WTC11 (cell line): ENCODE measurements at regions of chr6 and their contacts with region 1.

Region 1: GRCh38 chr6:3848925-3849605 is at the start of gene FAM50B:
- DNase-seq: peak; percentile 98
- ATAC-seq: peak; percentile 98
- H3K4me3 Mint-ChIP-seq: peak within 1 kb of the TSS; percentile 80
- H3K27ac Mint-ChIP-seq: no peak within 1 kb of the TSS
- H3K4me1 Mint-ChIP-seq: peaks cover 9% of the 10 kb centered on the region
- H3K27me3 Mint-ChIP-seq: peaks cover 6% of the 10 kb centered on the region
- CTCF ChIP-seq: peak; percentile 100
- total RNA-seq, gene FAM50B: 2.1 to 3.6 TPM (median 3.3 TPM) in 3 replicates

Region 2: DNA sequence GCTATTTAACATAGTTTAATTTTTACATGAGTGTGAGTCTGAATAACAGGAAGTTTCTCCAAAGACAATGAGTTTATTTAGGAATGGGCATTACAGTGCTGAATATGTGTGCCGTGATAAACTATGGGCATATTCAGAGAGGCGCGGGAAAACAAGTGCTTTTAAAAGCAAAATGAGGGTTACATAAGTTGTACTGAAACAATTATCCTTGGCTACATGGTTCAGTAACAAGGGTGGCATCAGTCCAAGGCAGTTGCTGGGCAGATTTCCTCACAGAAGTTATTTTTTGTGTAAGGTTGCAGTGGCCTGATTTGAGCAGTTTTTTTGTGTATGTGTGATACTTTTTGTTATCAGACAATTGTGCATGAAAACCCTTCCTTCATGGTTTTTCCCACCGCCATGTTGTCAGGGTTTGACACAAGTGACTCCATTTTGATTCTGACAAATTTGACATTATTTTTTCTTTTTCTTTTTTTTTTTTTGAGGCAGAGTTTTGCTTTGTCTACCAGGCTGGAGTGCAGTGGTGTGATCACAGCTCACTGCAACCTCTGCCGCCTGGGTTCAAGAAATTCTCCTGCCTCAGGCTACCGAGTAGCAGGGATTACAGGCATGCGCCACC is 75.3 kb before region 1 on chr6:
- CTCF ChIA-PET with region 1: interaction called, 21 read pairs
- POLR2A ChIA-PET with region 1: interaction called, 3 read pairs
- DNase-seq: no peak
- ATAC-seq: no peak
- H3K4me3 Mint-ChIP-seq: no peak overlapping the region
- H3K27ac Mint-ChIP-seq: no peak overlapping the region
- H3K4me1 Mint-ChIP-seq: peaks cover 24% of the 10 kb centered on the region
- H3K27me3 Mint-ChIP-seq: no peaks in the 10 kb centered on the region
- CTCF ChIP-seq: no peak

Region 3: DNA sequence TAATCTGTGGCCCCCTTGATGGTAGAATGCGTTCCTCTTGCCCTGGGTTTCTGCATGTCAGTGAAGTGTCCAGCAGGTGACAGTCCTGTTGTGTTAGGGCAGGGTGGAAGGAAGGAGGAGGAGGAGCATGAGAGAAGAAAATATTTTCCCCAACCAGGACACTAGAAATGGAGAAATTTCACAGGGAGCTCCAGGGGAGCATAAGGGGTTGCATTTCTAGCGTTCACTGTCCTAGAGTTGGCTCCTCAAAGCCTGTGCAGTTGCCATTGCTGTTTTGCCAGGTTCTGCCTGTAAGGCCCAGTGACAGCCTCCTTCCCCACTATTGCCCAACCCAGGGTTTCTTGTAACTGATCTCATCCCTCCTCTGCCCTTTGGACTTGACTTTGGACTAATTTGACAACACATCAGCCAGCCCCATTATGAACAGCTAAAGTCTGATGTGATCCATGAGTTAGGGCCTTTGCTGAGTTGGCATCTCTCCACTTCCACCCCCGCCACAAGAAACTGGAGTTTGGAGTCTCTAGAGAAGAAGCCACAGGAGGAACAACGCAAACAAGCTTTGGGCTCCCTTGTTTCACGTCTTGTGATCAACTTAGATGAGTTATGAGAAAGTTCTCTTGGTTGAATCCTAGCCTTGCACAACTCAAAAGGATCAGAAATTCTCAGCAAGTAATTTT is 13.9 kb before region 1 on chr6:
- CTCF ChIA-PET with region 1: interaction called, 35 read pairs
- POLR2A ChIA-PET with region 1: no interaction called
- DNase-seq: no peak
- ATAC-seq: no peak
- H3K4me3 Mint-ChIP-seq: no peak overlapping the region
- H3K27ac Mint-ChIP-seq: no peak overlapping the region
- H3K4me1 Mint-ChIP-seq: peaks cover 7% of the 10 kb centered on the region
- H3K27me3 Mint-ChIP-seq: no peaks in the 10 kb centered on the region
- CTCF ChIP-seq: no peak

Region 4: GRCh38 chr6:3905945-3906845 is 57.1 kb after region 1 on chr6:
- CTCF ChIA-PET with region 1: interaction called, 31 read pairs
- POLR2A ChIA-PET with region 1: no interaction called
- DNase-seq: peak; percentile 41
- ATAC-seq: peak; percentile 74
- H3K4me3 Mint-ChIP-seq: no peak overlapping the region
- H3K27ac Mint-ChIP-seq: peak overlapping the region; percentile 83
- H3K4me1 Mint-ChIP-seq: peaks cover 68% of the 10 kb centered on the region
- H3K27me3 Mint-ChIP-seq: no peaks in the 10 kb centered on the region; the same call in none of the 2 replicates
- CTCF ChIP-seq: no peak

Region 5: GRCh38 chr6:3948866-3949265 is 99.8 kb after region 1 on chr6:
- CTCF ChIA-PET with region 1: interaction called, 18 read pairs
- POLR2A ChIA-PET with region 1: no interaction called
- DNase-seq: no peak
- ATAC-seq: no peak
- H3K4me3 Mint-ChIP-seq: no peak overlapping the region
- H3K27ac Mint-ChIP-seq: no peak overlapping the region
- H3K4me1 Mint-ChIP-seq: peaks cover 22% of the 10 kb centered on the region
- H3K27me3 Mint-ChIP-seq: no peaks in the 10 kb centered on the region; the same call in 1 of the 2 replicates
- CTCF ChIP-seq: no peak

Region 6: GRCh38 chr6:4008324-4009047 is 159.4 kb after region 1 on chr6:
- CTCF ChIA-PET with region 1: interaction called, 20 read pairs
- POLR2A ChIA-PET with region 1: interaction called, 5 read pairs
- DNase-seq: no peak
- ATAC-seq: no peak
- H3K4me3 Mint-ChIP-seq: no peak overlapping the region
- H3K27ac Mint-ChIP-seq: no peak overlapping the region
- H3K4me1 Mint-ChIP-seq: peaks cover 21% of the 10 kb centered on the region
- H3K27me3 Mint-ChIP-seq: no peaks in the 10 kb centered on the region
- CTCF ChIP-seq: no peak

Region 7: DNA sequence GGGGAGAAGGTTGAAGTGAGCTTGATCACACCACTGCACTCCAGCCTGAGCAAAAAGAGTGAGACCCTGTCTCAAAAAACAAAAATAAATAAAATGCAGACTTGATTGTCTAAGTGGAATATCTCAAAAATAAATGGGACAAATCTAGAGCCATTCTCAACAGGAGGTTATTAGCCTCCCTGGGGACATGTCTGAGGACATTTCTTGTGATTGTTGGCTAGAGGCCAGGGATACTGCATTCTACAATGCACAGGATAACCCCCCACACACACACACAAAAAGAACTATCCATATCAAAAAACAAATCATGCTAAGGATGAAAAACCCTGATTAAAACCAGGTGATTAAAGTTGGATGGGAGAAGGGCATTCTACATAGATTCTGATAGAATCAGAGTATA is 192.4 kb after region 1 on chr6:
- CTCF ChIA-PET with region 1: no interaction called
- POLR2A ChIA-PET with region 1: no interaction called
- DNase-seq: no peak
- ATAC-seq: no peak
- H3K4me3 Mint-ChIP-seq: no peak overlapping the region
- H3K27ac Mint-ChIP-seq: no peak overlapping the region
- H3K4me1 Mint-ChIP-seq: no peaks in the 10 kb centered on the region
- H3K27me3 Mint-ChIP-seq: no peaks in the 10 kb centered on the region
- CTCF ChIP-seq: no peak

Region 8: GRCh38 chr6:5095236-5095635 is 1246.2 kb after region 1 on chr6:
- CTCF ChIA-PET with region 1: no interaction called
- POLR2A ChIA-PET with region 1: no interaction called
- DNase-seq: no peak
- ATAC-seq: no peak
- H3K4me3 Mint-ChIP-seq: no peak overlapping the region
- H3K27ac Mint-ChIP-seq: no peak overlapping the region
- H3K4me1 Mint-ChIP-seq: peaks cover 6% of the 10 kb centered on the region; the same call in 1 of the 2 replicates
- H3K27me3 Mint-ChIP-seq: peaks cover 8% of the 10 kb centered on the region; the same call in 1 of the 2 replicates
- CTCF ChIP-seq: no peak